ENCODE measurements at regions of chr9 and their contacts with region 1.

Region 1: GRCh38 chr9:69054989-69055388 is 19.4 kb downstream of the FXN start:
- DNase-seq: no peak
- H3K4me3 ChIP-seq: no peak overlapping the region
- H3K27ac ChIP-seq: no peak overlapping the region
- H3K4me1 ChIP-seq: no peaks in the 10 kb centered on the region
- H3K27me3 ChIP-seq: no peaks in the 10 kb centered on the region
- CTCF ChIP-seq: no peak
- POLR2A ChIP-seq: no peak

Region 2: DNA sequence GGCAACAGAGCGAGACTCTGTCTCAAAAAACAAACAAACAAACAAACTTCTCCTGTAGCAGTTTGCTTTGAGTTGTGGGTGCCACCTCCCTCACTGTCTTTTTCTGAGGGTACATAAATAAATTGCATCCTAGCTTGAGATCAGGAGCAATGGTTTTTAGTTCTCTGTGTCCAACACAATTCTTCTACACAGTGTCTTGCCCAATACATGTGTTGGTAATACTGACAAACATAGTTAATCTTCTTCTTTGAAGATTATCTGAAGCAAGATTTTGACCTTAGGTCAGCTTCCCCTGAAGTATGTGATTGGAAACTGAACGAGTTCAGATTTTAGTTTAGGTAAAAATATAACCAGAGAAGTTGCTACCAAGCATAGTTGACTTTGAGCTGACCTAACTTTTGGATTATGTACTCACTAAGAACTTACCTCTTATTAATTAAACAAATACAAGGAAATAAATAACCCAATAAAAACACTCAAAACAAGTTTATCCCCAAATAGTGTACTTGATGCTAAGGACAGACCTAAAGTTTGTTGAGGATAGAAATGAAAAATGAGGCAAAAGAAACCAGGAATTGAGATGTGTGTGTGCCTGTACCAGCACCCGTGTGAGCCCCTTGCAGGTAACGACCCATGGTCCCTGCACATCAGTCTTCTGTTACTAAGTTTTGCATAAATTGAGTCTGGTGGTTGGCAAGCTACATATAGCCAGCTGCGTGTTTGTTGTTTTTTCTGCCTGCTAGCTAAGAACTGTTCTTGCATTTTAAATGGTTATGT is 135.3 kb after region 1 on chr9:
- intact Hi-C with region 1: loop called (anchors 5 kb)
- DNase-seq: no peak
- H3K4me3 ChIP-seq: no peak overlapping the region
- H3K27ac ChIP-seq: no peak overlapping the region
- H3K4me1 ChIP-seq: peaks cover 0 to 9% (median 3%) of the 10 kb centered on the region in 6 donors
- H3K27me3 ChIP-seq: no peaks in the 10 kb centered on the region
- CTCF ChIP-seq: no peak
- POLR2A ChIP-seq: no peak

Region 3: DNA sequence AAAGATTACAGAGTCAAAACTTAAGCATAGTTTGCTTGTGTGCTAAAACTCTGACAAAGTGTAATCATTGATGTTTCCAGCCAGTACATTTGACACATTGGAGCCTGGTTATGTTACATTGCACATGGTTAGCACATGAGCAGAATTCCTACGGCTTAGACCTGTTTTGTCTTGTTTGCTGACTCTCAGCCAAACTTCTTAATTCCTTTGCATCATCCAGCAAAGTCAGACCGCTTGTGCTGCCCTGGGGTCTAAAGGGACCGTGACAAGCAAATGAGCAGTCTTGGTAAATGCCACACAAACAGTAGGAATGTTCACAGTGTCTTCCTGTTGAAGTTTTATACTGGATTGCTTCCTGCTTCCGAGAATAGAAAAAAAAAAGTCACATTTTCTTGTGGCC is 198.1 kb after region 1 on chr9:
- intact Hi-C with region 1: no loop called
- DNase-seq: no peak
- H3K4me3 ChIP-seq: no peak overlapping the region
- H3K27ac ChIP-seq: peak overlapping the region in 4 of 8 donors; percentile 17 to 60 (median 46)
- H3K4me1 ChIP-seq: no peaks in the 10 kb centered on the region
- H3K27me3 ChIP-seq: no peaks in the 10 kb centered on the region
- CTCF ChIP-seq: no peak
- POLR2A ChIP-seq: no peak

Measured in spleen (tissue), 13 donors.